Posterior cingulate gyrus (tissue), 11 donors: ENCODE measurements at regions of chr19 and their contacts with region 1.

Region 1: DNA sequence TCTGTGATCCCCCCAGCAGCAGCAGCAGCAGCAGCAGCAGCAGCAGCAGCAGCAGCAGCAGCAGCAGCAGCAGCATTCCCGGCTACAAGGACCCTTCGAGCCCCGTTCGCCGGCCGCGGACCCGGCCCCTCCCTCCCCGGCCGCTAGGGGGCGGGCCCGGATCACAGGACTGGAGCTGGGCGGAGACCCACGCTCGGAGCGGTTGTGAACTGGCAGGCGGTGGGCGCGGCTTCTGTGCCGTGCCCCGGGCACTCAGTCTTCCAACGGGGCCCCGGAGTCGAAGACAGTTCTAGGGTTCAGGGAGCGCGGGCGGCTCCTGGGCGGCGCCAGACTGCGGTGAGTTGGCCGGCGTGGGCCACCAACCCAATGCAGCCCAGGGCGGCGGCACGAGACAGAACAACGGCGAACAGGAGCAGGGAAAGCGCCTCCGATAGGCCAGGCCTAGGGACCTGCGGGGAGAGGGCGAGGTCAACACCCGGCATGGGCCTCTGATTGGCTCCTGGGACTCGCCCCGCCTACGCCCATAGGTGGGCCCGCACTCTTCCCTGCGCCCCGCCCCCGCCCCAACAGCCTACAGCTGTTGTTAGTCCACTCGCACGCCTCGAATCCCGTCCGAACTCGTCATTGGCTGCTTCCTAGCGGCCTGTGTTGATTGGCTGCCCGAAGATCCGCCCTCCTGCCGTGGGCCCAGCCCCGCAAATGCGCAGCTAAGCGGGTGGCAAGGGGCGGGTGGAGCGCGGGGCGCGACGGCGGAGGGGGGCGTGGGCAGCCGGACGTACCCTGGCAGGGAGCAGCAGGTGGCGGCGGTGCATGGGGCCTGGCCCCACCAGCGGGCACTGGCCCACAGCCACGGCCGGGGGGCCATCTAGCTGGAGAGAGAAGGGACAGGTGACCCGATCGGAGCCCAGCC is 1.4 kb upstream of the SIX5 start:
- DNase-seq: peak; percentile 83 to 98 (median 91)

Region 2: DNA sequence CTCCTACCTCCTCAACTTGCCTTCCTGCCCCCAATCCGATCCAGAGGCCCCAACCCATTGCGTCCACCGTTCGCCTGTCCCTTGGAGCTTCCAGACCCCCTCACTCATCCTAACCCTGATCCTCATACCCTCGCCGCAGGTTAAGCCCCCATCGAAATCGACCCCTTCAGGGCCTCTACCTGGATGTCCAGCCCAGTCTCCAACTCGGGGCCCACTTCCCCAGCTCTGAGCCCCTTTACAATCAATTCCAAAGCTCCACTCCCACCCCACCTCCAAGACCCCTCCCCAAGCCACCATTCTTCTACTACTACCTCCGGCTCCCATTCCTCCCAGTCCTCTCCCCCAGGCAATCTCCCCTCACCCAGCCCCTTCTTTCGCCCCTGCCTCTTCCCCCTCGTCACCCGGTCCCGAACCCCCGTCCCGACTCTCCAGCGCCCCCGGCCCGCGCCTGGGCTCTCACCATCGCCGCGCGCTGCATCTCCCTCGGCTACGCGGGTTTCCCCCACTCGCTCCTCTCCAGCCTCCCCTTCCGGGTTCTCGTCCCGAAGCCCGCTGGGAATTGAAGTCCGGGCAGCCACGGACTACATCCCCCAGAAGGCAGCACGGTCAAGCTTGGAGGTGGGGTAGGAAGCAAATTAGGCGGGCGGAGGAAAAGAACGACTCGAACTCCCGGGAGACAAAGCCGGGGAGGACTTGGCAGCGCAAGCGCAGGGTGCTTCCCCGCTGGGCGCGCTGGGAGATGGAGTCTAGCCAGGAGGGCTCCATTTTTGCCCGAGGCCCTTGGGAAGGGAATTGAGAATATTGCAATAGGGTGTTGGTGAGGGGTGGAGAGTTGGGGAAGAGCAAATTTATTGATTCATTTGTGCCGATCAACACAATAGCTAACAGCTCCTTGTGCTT is 39.8 kb before region 1 on chr19 and contains the start of gene FBXO46:
- intact Hi-C with region 1: loop called (anchors 5 kb)
- DNase-seq: peak; percentile 96 to 99 (median 98)

Region 3: GRCh38 chr19:45798995-45799517 is 28.6 kb after region 1 on chr19:
- intact Hi-C with region 1: loop called (anchors 1 kb)
- DNase-seq: peak in 6 of 10 donors; percentile 53 to 87 (median 68)

Region 4: GRCh38 chr19:45809643-45810159 is 39.3 kb after region 1 on chr19:
- intact Hi-C with region 1: no loop called
- DNase-seq: no peak